ENCODE measurements at regions of chr1 and their contacts with region 1.

Region 1: DNA sequence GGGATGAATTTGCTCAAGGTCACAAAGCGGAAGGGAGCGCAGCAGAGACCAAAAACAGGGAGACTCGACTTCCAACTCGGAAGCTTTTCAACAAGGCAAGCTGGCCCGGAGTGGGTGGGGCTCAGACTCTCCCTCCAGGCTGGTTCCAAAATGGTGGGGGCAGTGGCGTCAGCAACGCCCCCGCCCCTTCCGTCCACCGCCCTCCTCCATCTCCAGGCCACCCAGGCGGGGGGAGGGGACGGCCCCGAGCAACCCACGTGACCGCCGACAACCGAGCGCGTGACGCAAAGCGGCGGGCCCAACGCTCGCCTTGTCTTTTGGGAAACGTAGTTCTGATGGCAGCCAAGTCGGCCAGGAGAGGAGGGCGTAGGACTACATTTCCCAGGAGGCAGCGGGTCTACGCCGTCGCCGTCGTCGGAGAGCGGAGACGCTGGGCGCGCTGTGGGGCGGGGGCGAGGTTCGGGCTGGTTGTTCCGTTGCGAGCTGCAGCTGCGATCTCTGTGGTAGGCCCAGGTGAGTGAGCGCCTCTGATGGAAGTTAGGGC is at the start of gene THRAP3:
- DNase-seq: peak; percentile 100
- ATAC-seq: peak; percentile 91
- H3K4me3 Mint-ChIP-seq: peak within 1 kb of the TSS; percentile 85
- H3K27ac Mint-ChIP-seq: peak within 1 kb of the TSS; percentile 99
- H3K4me1 Mint-ChIP-seq: peaks cover 27% of the 10 kb centered on the region
- H3K27me3 Mint-ChIP-seq: no peaks in the 10 kb centered on the region
- CTCF ChIP-seq: no peak
- total RNA-seq, gene THRAP3: 119 to 121 TPM

Region 2: GRCh38 chr1:36155408-36156328 is 68.4 kb before region 1 on chr1 and contains the start of gene MAP7D1:
- CTCF ChIA-PET with region 1: interaction called, 33 read pairs
- POLR2A ChIA-PET with region 1: interaction called, 38 read pairs
- intact Hi-C with region 1: loop called (anchors 2 kb)
- DNase-seq: peak; percentile 89
- ATAC-seq: peak; percentile 60
- H3K4me3 Mint-ChIP-seq: peak within 1 kb of the TSS; percentile 83
- H3K27ac Mint-ChIP-seq: peak within 1 kb of the TSS; percentile 95
- H3K4me1 Mint-ChIP-seq: peaks cover 66% of the 10 kb centered on the region
- H3K27me3 Mint-ChIP-seq: no peaks in the 10 kb centered on the region
- CTCF ChIP-seq: no peak
- total RNA-seq, gene MAP7D1: 125 to 129 TPM

Region 3: DNA sequence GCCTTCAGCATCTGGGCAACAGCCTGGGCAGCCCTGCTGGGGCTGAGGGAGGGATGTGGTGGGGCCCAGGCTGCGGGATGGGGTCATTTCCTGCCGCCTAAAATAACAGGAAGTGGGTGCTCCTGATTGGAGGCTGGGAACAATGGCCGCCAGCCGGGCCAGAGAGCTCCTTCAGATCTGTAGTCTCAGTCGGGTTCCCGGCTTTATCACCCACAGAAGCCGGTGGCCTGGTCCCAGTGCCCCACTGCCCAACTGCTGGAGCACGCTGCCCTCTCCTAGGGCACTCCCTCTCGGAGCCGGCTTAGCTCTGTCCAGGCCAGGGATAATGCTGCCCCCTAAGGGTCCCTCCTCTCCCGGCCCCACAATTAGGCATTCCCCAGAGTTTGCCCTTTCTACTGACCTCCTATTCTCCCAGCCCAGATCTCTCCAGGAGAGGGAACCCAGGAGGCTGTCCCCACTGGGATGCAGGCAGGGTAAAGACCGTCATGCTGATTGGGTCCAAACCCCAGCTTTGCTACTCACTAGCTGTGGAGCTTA is 63.0 kb before region 1 on chr1:
- CTCF ChIA-PET with region 1: interaction called, 4 read pairs
- POLR2A ChIA-PET with region 1: interaction called, 38 read pairs
- intact Hi-C with region 1: no loop called
- DNase-seq: peak; percentile 88
- ATAC-seq: peak; percentile 56
- H3K4me3 Mint-ChIP-seq: peak overlapping the region; percentile 80
- H3K27ac Mint-ChIP-seq: peak overlapping the region; percentile 94
- H3K4me1 Mint-ChIP-seq: peaks cover 60% of the 10 kb centered on the region
- H3K27me3 Mint-ChIP-seq: no peaks in the 10 kb centered on the region
- CTCF ChIP-seq: no peak

Region 4: DNA sequence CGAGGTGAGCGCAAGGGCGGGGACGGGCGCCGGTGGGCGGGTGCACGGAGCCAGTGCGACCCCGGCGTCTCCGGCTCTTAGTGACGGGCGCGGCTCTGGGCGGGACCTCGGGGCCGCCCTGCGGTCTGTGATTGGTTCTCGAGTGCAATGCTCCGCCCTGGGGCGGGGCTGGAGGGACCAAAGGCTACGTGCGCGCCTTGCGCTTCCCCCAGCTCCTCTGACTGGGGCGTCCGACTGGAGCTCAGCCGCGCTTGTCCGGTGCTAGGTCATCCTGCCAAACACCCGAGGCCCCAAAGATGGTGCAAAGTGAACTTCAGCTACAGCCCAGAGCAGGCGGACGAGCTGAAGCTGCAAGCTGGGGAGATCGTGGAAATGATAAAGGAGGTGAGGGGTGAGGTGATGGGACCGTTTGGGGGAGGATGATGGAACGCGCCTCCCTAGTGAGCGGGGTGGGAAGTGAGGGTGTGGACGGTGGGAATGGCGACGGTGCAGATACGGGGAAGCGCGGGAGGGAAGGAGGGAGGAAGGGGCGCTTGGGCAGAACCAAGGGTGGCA is 82.9 kb after region 1 on chr1:
- CTCF ChIA-PET with region 1: no interaction called
- POLR2A ChIA-PET with region 1: interaction called, 11 read pairs
- intact Hi-C with region 1: no loop called
- DNase-seq: peak; percentile 95
- ATAC-seq: peak; percentile 97
- H3K4me3 Mint-ChIP-seq: peak overlapping the region; percentile 93
- H3K27ac Mint-ChIP-seq: peak overlapping the region; percentile 92
- H3K4me1 Mint-ChIP-seq: peaks cover 32% of the 10 kb centered on the region
- H3K27me3 Mint-ChIP-seq: no peaks in the 10 kb centered on the region
- CTCF ChIP-seq: no peak

Measured in activated CD8-positive, alpha-beta T cell treated with anti-CD3 and anti-CD28 coated beads for 36 hours (primary cell).